ENCODE measurements at regions of chr2 and their contacts with region 1.

Region 1: DNA sequence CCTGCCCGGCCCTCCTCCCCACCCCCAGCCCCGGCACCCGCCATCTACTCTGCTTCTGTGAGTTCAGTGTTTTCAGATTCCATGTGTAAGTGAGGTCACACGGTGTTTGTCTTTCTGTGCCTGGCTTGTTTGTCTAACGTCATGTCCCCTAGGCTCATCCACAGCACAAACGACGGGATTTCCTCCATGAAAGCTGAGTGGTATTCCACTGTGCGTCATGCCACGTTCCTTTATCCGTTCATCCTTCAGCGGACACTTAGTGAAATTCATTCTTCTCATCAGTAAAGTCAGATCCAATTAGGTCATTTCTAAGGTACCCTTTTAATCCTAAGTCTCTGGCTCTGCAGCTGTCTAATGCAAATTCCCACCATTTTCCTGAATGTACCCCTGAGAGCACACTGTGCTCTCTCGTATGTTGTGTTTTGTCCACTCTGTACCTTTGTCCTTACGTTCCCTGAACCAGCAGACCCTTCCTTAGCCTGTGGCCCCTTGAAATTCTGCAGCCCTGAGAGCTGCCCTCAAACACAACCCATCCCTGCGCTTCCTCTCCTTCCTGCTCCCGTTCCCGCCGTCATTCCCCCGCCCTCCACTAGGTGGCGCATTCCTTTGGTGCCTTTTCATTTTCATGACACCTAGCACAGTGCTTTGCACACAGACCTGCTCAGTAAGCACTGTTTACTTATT is 44.1 kb downstream of the TRAPPC12 start:
- DNase-seq: no peak
- H3K4me3 ChIP-seq: no peak overlapping the region
- H3K27me3 ChIP-seq: no peaks in the 10 kb centered on the region
- CTCF ChIP-seq: peak; percentile 98

Region 2: GRCh38 chr2:3399829-3400228 is 23.8 kb before region 1 on chr2:
- CTCF ChIA-PET with region 1: interaction called, 30 read pairs
- POLR2A ChIA-PET with region 1: no interaction called
- DNase-seq: no peak
- H3K4me3 ChIP-seq: no peak overlapping the region
- H3K27me3 ChIP-seq: no peaks in the 10 kb centered on the region
- CTCF ChIP-seq: no peak

Region 3: DNA sequence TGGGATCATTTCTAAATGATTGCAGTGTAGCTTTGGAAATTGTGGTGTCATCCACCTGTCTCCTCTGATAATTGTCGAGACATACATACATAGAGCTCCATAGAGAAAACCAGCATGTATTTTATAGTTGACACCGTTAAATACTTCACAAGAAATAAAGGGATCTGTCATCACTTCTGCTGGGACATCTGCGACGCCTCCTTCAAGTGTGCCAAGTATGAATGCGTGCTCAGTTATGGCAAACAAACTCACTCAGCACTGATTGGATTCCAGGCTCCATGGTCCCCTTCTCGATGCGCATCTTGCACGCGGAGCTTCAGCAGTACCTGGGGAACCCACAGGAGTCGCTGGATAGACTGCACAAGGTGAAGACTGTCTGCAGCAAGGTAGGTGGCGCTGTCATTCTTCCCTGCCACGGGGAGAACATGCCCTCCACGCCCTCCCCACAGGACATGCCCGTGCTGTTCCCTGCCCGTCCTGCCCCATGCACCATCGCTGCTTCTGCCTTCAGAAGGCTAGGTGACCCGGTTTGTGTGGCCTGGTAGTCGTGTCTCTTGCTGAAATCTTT is 20.0 kb after region 1 on chr2:
- CTCF ChIA-PET with region 1: interaction called, 40 read pairs
- POLR2A ChIA-PET with region 1: no interaction called
- DNase-seq: no peak
- H3K4me3 ChIP-seq: no peak overlapping the region
- H3K27me3 ChIP-seq: no peaks in the 10 kb centered on the region
- CTCF ChIP-seq: no peak

Region 4: DNA sequence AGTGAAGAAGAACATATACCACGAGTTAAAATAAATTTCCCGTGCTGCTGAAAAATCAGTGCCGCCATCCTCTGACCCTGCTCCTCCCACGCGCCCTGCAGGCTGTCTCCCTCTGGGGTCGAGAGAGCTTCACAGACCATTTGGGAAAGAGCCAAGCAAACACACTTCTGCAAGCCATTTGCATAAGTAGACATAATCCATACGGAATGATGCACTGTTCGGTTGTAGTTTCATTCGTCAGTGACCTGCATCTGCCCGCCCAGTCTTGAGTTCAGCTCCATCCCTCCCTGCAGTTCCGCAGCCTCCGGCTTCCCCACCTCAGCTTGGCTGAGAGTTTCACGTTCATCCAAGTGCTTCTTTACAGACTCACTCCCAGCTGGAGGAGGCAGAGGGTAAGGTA is 25.5 kb after region 1 on chr2:
- CTCF ChIA-PET with region 1: interaction called, 40 read pairs
- POLR2A ChIA-PET with region 1: no interaction called
- DNase-seq: no peak
- H3K4me3 ChIP-seq: no peak overlapping the region
- H3K27me3 ChIP-seq: no peaks in the 10 kb centered on the region
- CTCF ChIP-seq: no peak

Region 5: DNA sequence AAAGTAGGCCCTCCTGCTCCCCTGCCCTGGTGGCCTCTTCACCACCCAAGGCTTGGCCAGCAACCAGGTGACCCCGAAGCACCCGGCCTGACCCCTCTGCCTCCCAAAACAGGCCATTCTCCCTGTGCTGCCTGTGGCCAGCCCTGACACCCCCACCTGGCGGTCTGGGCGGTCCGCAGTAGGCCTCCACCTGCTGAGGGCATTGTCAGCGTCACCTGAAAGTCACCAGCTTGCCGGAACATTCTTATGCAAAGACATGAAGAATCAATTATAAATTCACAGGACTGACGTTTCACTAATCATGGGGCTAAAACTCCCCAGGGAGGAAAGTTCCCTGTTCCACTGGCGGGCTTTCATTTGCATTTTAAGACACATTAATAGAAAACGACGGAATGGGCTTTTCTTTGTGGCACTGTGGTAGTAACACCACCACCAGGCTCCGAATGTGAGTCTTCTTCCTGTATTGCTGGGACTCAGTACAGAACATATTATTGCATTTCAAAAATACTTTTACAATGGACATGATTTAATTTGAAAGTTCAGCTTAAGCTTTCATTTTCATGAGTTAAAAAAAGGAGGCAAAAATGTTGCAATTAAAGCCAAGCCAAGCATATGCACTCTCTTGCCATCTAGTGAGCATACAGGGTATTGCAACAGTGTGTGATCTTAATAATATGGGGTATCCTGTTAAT is 38.3 kb after region 1 on chr2:
- CTCF ChIA-PET with region 1: interaction called, 81 read pairs
- POLR2A ChIA-PET with region 1: no interaction called
- DNase-seq: no peak
- H3K4me3 ChIP-seq: no peak overlapping the region
- H3K27me3 ChIP-seq: no peaks in the 10 kb centered on the region
- CTCF ChIP-seq: peak; percentile 85

Region 6: DNA sequence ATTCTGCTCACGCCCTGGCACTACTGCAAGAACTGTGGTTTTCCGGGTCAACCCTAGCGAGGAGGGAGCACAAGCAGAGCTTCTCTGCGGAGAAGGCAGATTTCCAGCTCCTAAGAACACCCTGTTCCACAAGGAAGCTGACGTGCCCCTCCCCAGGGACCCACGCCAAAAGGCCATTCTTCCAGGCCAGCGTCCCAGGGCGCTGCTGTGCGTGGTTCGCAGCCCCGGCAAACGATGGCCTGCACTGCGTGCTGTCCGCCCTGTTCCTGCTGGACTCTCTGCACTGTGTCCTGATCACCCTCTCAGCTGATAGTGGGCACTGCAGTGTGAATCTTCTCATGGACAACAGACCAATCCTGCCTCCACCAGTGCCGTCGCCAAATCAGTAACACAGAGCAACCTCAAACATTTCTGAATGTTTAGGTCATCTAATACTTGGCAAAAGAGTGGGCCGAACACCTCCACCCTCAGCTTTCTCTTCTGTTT is 46.6 kb after region 1 on chr2:
- CTCF ChIA-PET with region 1: interaction called, 81 read pairs
- POLR2A ChIA-PET with region 1: no interaction called
- DNase-seq: peak; percentile 68
- H3K4me3 ChIP-seq: no peak overlapping the region
- H3K27me3 ChIP-seq: no peaks in the 10 kb centered on the region
- CTCF ChIP-seq: 0 out of 2 replicates have a peak, but pooled peaks have one; percentile 2

Region 7: GRCh38 chr2:3651691-3652648 is 228.3 kb after region 1 on chr2:
- CTCF ChIA-PET with region 1: interaction called, 16 read pairs
- POLR2A ChIA-PET with region 1: no interaction called
- DNase-seq: no peak
- H3K4me3 ChIP-seq: no peak overlapping the region
- H3K27me3 ChIP-seq: 0 out of 2 replicates have a peak, but pooled peaks cover 1% of the 10 kb centered on the region
- CTCF ChIP-seq: no peak